ENCODE measurements at regions of chr9 and their contacts with region 1.

Region 1: GRCh38 chr9:125338929-125339328 is 77.3 kb downstream of the GAPVD1 start:
- DNase-seq: no peak
- ATAC-seq: no peak
- H3K4me3 ChIP-seq: no peak overlapping the region
- H3K27ac ChIP-seq: no peak overlapping the region
- H3K4me1 ChIP-seq: peaks cover 0 to 14% (median 6%) of the 10 kb centered on the region in 12 donors
- H3K27me3 ChIP-seq: no peaks in the 10 kb centered on the region
- CTCF ChIP-seq: no peak
- POLR2A ChIP-seq: no peak

Region 2: GRCh38 chr9:125312411-125312810 is 26.5 kb before region 1 on chr9:
- intact Hi-C with region 1: loop called in 1 of 10 experiments (anchors 2 kb)
- DNase-seq: no peak
- ATAC-seq: no peak
- H3K4me3 ChIP-seq: no peak overlapping the region
- H3K27ac ChIP-seq: no peak overlapping the region
- H3K4me1 ChIP-seq: no peaks in the 10 kb centered on the region
- H3K27me3 ChIP-seq: no peaks in the 10 kb centered on the region
- CTCF ChIP-seq: no peak
- POLR2A ChIP-seq: no peak